Gastrocnemius medialis (tissue), 4 donors: ENCODE measurements at regions of chr9 and their contacts with region 1.

Region 1: DNA sequence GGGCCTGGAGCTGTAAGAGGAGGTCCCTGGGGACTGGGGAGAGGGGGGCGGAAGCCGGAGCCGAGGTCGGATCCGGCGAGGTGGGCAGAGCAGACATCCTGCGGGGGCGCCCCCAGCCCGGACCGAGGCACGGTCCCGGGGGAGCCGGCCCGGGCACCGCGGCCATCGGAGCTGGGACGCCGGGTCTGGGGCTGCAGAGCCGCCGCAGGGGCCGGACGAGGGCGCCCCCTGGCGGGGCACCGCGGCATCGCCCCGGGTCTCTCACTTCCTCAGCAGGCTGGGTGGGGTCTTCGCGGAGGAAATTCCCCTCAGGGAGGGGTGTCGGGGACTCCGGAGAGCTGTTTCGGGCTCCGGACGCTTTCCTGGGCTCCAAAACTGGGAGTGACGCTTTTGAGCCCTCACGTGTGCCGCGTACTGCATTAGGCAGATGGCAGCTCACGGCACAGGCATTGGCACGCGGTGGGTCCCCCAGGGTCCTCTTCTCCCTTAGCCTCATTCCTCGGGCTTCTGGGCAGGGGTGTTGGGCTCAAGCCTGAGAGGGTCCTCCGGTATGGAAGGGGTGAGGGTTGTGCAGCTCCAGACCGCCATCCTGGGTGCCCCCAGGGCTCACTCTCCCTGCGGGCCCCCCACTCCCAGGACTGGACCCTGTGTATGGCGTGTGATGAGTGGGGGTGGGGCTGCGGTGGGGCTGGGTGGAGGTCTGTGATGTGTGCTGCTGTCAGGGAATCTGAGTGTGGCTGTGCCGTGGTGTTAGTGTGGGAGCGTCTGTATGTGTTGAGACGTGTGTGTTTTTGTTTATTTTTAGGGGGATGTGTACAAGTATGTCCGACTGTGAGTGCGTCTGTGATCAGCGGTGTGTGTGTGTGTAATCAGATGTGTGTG is 29.6 kb downstream of the LHX2 start:
- DNase-seq: peak in 1 of 2 donors; percentile 21
- ATAC-seq: peak; percentile 49 to 70
- H3K4me3 ChIP-seq: peak overlapping the region; percentile 33 to 57 (median 48)
- H3K27ac ChIP-seq: no peak overlapping the region
- H3K4me1 ChIP-seq: peaks cover 6 to 21% of the 10 kb centered on the region in 2 donors
- H3K27me3 ChIP-seq: peaks cover 13 to 54% (median 33%) of the 10 kb centered on the region in 3 donors
- CTCF ChIP-seq: peak; percentile 89 to 98 (median 96)
- POLR2A ChIP-seq: no peak

Region 2: DNA sequence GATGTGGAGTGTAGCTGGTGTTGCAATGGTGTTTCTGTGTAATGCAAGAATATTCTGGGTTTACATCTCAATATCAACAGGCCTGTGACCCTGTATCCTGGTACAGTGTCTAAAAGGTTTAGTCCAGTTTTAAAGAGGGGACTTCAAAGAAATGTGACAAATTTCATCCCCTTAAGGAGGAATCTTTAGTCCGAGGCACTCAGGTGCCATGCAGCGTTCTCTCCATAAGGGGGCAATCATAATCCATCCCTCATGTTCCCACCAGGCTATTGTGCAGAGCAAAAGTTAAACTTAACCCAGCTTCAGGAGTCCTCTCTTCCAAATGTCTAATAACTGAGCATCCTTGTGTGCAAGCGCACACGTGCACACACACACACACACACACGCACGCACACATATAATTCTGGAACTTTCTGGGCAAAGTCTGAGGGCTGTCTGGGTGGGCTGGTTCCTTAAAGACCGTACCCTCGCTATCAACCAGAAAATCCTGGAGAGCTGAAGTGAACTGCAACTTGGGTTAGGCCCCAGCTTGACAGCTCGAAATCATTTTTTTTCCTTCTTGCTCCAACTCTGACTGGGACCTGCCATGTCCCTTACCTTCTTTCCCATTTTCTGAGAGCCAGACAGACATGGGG is 639.2 kb before region 1 on chr9:
- in situ Hi-C with region 1: no loop called
- intact Hi-C with region 1: loop called (anchors 10 kb)
- DNase-seq: no peak
- ATAC-seq: peak in 1 of 2 donors; percentile 27
- H3K4me3 ChIP-seq: no peak overlapping the region
- H3K27ac ChIP-seq: no peak overlapping the region
- H3K4me1 ChIP-seq: no peaks in the 10 kb centered on the region
- H3K27me3 ChIP-seq: no peaks in the 10 kb centered on the region
- CTCF ChIP-seq: peak; percentile 28 to 60 (median 45)
- POLR2A ChIP-seq: no peak

Region 3: DNA sequence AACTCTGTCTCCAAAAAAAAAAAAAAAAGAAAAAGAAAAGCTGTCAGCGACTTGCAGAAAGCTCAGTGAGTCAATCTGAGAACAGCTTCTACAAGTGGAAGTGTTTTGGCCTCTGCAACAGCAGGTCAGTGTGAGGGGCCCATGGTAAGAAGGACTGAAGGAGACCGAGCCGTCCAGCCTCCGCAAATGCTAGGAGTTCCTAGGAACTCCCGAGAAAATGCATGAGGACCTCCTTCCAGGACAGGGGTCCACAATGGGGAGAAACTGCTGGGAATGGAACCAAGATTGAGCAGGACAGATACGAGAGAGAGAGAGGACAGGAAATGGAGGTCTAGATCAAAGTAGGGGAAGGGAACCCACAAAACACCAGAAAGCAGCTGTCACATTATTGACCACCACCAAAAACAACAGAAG is 504.7 kb before region 1 on chr9:
- in situ Hi-C with region 1: loop called (anchors 5 to 25 kb)
- intact Hi-C with region 1: no loop called
- DNase-seq: no peak
- ATAC-seq: no peak
- H3K4me3 ChIP-seq: no peak overlapping the region
- H3K27ac ChIP-seq: no peak overlapping the region
- H3K4me1 ChIP-seq: no peaks in the 10 kb centered on the region
- H3K27me3 ChIP-seq: no peaks in the 10 kb centered on the region
- CTCF ChIP-seq: no peak
- POLR2A ChIP-seq: no peak

Region 4: DNA sequence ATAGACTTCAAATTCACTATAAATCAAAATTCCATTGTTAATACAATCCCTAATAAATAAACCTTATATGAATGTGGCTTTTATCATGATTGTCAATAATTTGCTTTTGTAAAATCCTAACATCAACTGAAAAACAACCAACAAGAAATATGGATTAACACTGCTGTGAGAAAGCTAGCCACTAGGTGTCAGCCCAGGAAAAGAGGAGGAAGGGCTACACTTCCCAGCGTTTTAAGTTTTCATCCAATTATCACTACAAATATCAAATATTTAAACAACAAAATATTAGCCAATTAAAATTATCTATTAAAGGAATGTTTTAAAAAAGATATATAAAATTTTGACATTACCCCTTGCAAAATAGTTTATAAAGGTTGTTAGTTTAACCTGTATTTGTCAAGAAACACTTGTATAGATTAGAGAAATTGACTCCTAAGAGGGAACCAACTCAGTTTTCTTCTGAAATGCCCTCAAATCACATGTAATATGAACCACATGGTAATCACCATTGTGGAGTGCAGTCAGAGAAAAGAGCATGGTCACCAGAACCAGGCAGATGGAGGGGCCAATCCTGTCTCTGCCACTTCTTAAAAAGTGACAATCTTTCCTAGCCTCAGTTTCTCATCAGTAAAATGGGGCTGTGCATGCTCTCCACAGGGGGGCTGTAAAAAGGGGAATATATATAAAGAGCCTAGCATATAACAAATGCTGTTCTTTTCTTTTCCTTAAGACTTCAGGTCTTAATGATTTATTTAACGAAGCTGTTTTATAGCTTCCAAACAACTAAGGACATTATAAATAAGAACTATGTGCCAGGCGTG is 497.0 kb before region 1 on chr9:
- in situ Hi-C with region 1: loop called (anchors 5 to 25 kb)
- intact Hi-C with region 1: loop called (anchors 1 kb)
- DNase-seq: no peak
- ATAC-seq: no peak
- H3K4me3 ChIP-seq: no peak overlapping the region
- H3K27ac ChIP-seq: no peak overlapping the region
- H3K4me1 ChIP-seq: no peaks in the 10 kb centered on the region
- H3K27me3 ChIP-seq: no peaks in the 10 kb centered on the region
- CTCF ChIP-seq: peak; percentile 53 to 79 (median 70)
- POLR2A ChIP-seq: no peak

Region 5: DNA sequence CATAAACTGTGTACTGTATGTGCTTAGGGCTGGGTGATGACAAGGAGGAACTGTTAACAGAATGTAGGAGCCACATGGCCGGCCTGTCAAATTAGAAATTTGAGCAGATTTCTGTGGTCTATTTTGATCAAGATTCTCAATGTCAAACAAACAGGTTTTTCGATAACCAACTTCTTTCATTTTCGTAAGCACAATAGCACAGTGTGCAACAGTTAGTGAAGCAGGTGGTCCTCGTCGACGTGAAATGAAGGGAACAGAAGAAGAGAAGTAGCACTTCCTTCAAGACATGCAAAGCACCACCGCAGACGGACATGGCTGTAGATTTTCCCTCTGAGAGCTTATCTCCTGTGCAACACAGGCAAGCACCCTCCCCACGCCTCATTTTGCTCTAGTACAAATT is 433.1 kb before region 1 on chr9:
- in situ Hi-C with region 1: no loop called
- intact Hi-C with region 1: no loop called
- DNase-seq: no peak
- ATAC-seq: no peak
- H3K4me3 ChIP-seq: no peak overlapping the region
- H3K27ac ChIP-seq: no peak overlapping the region
- H3K4me1 ChIP-seq: no peaks in the 10 kb centered on the region
- H3K27me3 ChIP-seq: no peaks in the 10 kb centered on the region
- CTCF ChIP-seq: no peak
- POLR2A ChIP-seq: no peak

Region 6: GRCh38 chr9:123749580-123750202 is 291.5 kb before region 1 on chr9:
- in situ Hi-C with region 1: loop called in 1 of 4 experiments (anchors 25 kb)
- intact Hi-C with region 1: no loop called
- DNase-seq: no peak
- ATAC-seq: no peak
- H3K4me3 ChIP-seq: no peak overlapping the region
- H3K27ac ChIP-seq: no peak overlapping the region
- H3K4me1 ChIP-seq: peaks cover 8 to 15% of the 10 kb centered on the region in 2 donors
- H3K27me3 ChIP-seq: no peaks in the 10 kb centered on the region
- CTCF ChIP-seq: no peak
- POLR2A ChIP-seq: no peak